ENCODE measurements at regions of chr1 and their contacts with region 1.

Region 1: DNA sequence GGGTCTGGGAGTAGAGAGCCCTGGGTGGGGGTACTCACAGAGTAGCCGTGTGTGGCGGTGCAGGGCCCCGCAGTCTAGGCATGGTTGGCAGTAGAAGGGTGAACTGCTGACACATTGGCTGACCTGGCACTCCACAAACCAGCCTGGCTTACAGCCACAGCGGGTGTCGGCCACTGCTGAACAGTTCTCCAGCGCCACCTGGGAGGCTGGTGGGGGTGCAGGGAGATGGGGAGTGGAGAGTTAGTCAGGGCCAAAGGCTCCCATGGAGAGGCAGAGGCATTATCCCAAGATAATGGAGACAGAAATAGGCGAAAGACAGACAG is 1.5 kb downstream of the TNFRSF25 start:
- DNase-seq: peak; percentile 85
- H3K4me3 Mint-ChIP-seq: peak overlapping the region; percentile 92
- H3K27ac Mint-ChIP-seq: peak overlapping the region; percentile 87
- H3K4me1 Mint-ChIP-seq: peaks cover 51% of the 10 kb centered on the region
- H3K27me3 Mint-ChIP-seq: no peaks in the 10 kb centered on the region

Region 2: GRCh38 chr1:6026095-6026809 is 438.2 kb before region 1 on chr1:
- CTCF ChIA-PET with region 1: no interaction called
- intact Hi-C with region 1: loop called (anchors 2 kb)
- DNase-seq: peak; percentile 97
- H3K4me3 Mint-ChIP-seq: peak overlapping the region; percentile 88
- H3K27ac Mint-ChIP-seq: peak overlapping the region; percentile 94
- H3K4me1 Mint-ChIP-seq: peaks cover 47% of the 10 kb centered on the region
- H3K27me3 Mint-ChIP-seq: no peaks in the 10 kb centered on the region

Region 3: DNA sequence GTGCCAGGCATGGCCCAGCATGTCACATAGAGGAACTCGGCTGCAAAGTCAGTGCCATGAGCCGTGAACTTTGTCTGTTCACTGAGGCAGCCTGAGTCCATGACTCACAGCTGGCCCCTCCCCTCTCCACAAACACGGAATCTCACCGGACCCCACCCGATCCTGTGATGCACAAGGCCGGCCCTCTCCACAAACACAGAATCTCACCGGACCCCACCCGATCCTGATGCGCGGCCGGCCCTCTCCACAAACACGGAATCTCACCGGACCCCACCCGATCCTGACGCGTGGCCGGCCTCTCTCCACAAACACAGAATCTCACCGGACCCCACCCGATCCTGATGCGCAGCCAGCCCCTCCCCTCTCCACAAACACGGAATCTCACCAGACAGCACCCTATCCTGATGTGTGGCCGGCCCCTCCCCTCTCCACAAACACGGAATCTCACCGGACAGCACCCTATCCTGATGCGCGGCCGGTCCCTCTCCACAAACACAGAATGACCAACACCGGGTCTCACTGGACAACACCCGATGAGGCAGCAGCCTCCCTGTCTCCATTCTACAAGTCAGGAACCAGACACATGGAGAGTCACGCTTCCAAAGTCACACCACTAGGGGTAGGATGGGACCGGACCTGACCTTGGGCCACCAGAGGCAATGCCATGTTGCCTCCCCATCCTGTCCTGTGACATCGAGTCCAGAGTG is 164.0 kb before region 1 on chr1:
- CTCF ChIA-PET with region 1: no interaction called
- intact Hi-C with region 1: no loop called
- DNase-seq: no peak
- H3K4me3 Mint-ChIP-seq: no peak overlapping the region
- H3K27ac Mint-ChIP-seq: no peak overlapping the region
- H3K4me1 Mint-ChIP-seq: no peaks in the 10 kb centered on the region
- H3K27me3 Mint-ChIP-seq: no peaks in the 10 kb centered on the region

Region 4: DNA sequence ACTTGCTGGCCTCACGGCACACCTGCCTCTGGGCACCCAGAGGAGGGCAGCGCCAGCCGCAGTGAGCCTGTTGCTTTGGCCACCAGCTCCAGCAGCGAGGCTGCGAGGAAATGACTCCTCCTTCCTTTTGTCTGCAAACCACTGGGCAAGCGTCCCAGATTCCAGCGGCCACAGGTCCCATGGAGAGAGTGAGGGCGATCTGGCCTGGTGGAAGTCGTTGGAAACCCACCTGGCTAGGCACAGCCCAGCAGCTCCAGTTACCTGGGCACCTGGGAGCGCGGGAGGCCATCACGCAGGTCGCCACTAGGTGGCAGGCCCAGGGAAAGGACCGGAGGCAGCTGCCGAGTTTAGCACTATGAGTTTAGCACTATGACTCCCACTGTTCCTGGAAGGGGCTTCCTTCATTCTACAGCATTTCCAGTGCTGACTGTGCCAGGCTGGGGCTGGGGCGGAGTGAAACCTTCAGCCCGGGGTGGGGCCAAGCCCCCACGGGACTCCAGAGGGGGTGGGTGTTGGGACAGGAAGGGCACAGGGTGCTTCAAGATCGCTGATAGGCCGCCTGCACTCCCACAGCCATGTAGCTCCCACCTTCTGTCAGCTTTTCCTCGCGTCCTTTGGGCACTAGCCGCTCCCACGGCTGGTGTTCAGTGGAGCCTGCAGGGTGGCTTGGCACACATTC is 41.0 kb before region 1 on chr1:
- CTCF ChIA-PET with region 1: interaction called, 6 read pairs
- intact Hi-C with region 1: loop called (anchors 2 kb)
- DNase-seq: peak; percentile 87
- H3K4me3 Mint-ChIP-seq: peak overlapping the region; percentile 18
- H3K27ac Mint-ChIP-seq: no peak overlapping the region
- H3K4me1 Mint-ChIP-seq: peaks cover 10% of the 10 kb centered on the region
- H3K27me3 Mint-ChIP-seq: peaks cover 39% of the 10 kb centered on the region

Region 5: GRCh38 chr1:6445062-6445763 is 19.3 kb before region 1 on chr1:
- CTCF ChIA-PET with region 1: interaction called, 18 read pairs
- intact Hi-C with region 1: loop called (anchors 1 kb)
- DNase-seq: peak; percentile 62
- H3K4me3 Mint-ChIP-seq: no peak overlapping the region
- H3K27ac Mint-ChIP-seq: no peak overlapping the region
- H3K4me1 Mint-ChIP-seq: peaks cover 15% of the 10 kb centered on the region
- H3K27me3 Mint-ChIP-seq: peaks cover 45% of the 10 kb centered on the region

Measured in activated naive CD4-positive, alpha-beta T cell treated with anti-CD3 and anti-CD28 coated beads for 36 hours (primary cell).